Transverse colon (tissue), 4 donors: ENCODE measurements at regions of chr20 and their contacts with region 1.

Region 1: GRCh38 chr20:14049111-14049510 is 53.8 kb downstream of the MACROD2 start:
- DNase-seq: no peak
- H3K4me3 ChIP-seq: no peak overlapping the region
- H3K27ac ChIP-seq: no peak overlapping the region
- H3K4me1 ChIP-seq: no peaks in the 10 kb centered on the region
- H3K27me3 ChIP-seq: no peaks in the 10 kb centered on the region
- CTCF ChIP-seq: no peak
- EP300 ChIP-seq: no peak
- POLR2A ChIP-seq: no peak

Region 2: DNA sequence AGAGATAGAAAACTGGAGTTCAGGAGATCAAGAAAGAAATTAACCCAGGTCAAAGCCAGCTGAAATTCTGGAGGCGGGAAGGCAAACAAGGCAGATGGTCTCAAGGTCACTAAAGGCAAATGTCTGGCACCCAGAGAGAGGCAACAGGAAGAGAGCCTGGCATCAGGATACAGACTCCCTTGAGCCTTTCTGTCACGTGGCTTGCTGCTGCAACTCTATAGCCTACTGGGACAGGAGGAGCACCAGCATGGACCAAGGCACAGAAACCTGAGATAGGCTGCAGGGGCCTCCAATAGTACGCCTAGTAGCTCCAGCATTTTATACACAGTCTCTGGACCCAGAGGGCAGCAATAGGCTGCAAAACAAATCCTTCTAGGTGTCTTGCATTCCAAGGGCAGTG is 133.8 kb before region 1 on chr20:
- in situ Hi-C with region 1: no loop called
- intact Hi-C with region 1: no loop called
- DNase-seq: no peak
- H3K4me3 ChIP-seq: no peak overlapping the region
- H3K27ac ChIP-seq: no peak overlapping the region
- H3K4me1 ChIP-seq: no peaks in the 10 kb centered on the region
- H3K27me3 ChIP-seq: no peaks in the 10 kb centered on the region
- CTCF ChIP-seq: no peak
- EP300 ChIP-seq: no peak
- POLR2A ChIP-seq: no peak

Region 3: GRCh38 chr20:14142171-14142570 is 93.1 kb after region 1 on chr20:
- in situ Hi-C with region 1: loop called in 1 of 4 experiments (anchors 25 kb)
- intact Hi-C with region 1: no loop called
- DNase-seq: peak; percentile 18
- H3K4me3 ChIP-seq: no peak overlapping the region
- H3K27ac ChIP-seq: no peak overlapping the region
- H3K4me1 ChIP-seq: peaks cover 0 to 2% (median 0%) of the 10 kb centered on the region in 4 donors
- H3K27me3 ChIP-seq: no peaks in the 10 kb centered on the region
- CTCF ChIP-seq: peak; percentile 32 to 46 (median 43)
- EP300 ChIP-seq: no peak
- POLR2A ChIP-seq: no peak

Region 4: GRCh38 chr20:14264869-14265268 is 215.8 kb after region 1 on chr20:
- in situ Hi-C with region 1: no loop called
- intact Hi-C with region 1: no loop called
- DNase-seq: no peak
- H3K4me3 ChIP-seq: no peak overlapping the region
- H3K27ac ChIP-seq: no peak overlapping the region
- H3K4me1 ChIP-seq: no peaks in the 10 kb centered on the region
- H3K27me3 ChIP-seq: no peaks in the 10 kb centered on the region
- CTCF ChIP-seq: peak; percentile 23 to 46 (median 37)
- EP300 ChIP-seq: no peak
- POLR2A ChIP-seq: no peak